ENCODE measurements at regions of chrX and their contacts with region 1.

Region 1: DNA sequence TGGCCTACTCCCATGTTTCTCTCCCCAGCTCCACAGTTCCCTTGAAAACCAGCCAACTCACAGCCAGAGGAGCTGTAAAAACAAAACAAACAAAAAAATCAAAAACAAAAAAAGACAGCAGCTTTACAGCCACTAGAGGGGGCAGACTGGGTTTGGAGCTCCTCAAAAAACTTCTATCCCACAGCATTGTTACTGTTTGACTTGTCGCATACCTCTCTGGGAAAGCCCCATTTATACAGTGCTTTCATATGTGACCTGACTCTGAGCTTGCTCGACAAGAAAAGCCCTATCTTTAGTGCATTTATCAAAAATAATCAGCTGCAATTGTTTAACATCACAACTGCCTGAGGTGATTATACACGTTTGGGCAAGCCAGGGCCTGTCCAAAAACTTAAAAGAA is 21.6 kb downstream of the TSPAN6 start:
- DNase-seq: peak; percentile 78
- ATAC-seq: peak; percentile 63
- H3K4me3 ChIP-seq: no peak overlapping the region
- H3K27ac ChIP-seq: no peak overlapping the region
- H3K4me1 ChIP-seq: no peaks in the 10 kb centered on the region
- H3K27me3 ChIP-seq: no peaks in the 10 kb centered on the region
- CTCF ChIP-seq: peak; percentile 67

Region 2: GRCh38 chrX:100512471-100512870 is 102.5 kb before region 1 on chrX:
- CTCF ChIA-PET with region 1: interaction called, 5 read pairs
- POLR2A ChIA-PET with region 1: no interaction called
- intact Hi-C with region 1: loop called (anchors 2 kb)
- DNase-seq: peak; percentile 40
- ATAC-seq: no peak; the same call in 1 of the 2 replicates
- H3K4me3 ChIP-seq: no peak overlapping the region
- H3K27ac ChIP-seq: no peak overlapping the region
- H3K4me1 ChIP-seq: peaks cover under 1% of the 10 kb centered on the region; the same call in 1 of the 2 replicates
- H3K27me3 ChIP-seq: no peaks in the 10 kb centered on the region
- CTCF ChIP-seq: peak; percentile 55

Region 3: GRCh38 chrX:100584611-100585010 is 30.4 kb before region 1 on chrX and contains the start of gene TNMD:
- CTCF ChIA-PET with region 1: no interaction called
- POLR2A ChIA-PET with region 1: no interaction called
- intact Hi-C with region 1: no loop called
- DNase-seq: no peak
- ATAC-seq: no peak
- H3K4me3 ChIP-seq: no peak within 1 kb of the TSS
- H3K27ac ChIP-seq: no peak within 1 kb of the TSS
- H3K4me1 ChIP-seq: no peaks in the 10 kb centered on the region
- H3K27me3 ChIP-seq: peaks cover 23% of the 10 kb centered on the region
- CTCF ChIP-seq: no peak
- total RNA-seq, gene TNMD: not detected in 2 replicates

Region 4: GRCh38 chrX:100596601-100597000 is 18.4 kb before region 1 on chrX:
- CTCF ChIA-PET with region 1: no interaction called
- POLR2A ChIA-PET with region 1: no interaction called
- intact Hi-C with region 1: no loop called
- DNase-seq: no peak
- ATAC-seq: no peak
- H3K4me3 ChIP-seq: no peak overlapping the region
- H3K27ac ChIP-seq: no peak overlapping the region
- H3K4me1 ChIP-seq: no peaks in the 10 kb centered on the region
- H3K27me3 ChIP-seq: peaks cover 34% of the 10 kb centered on the region
- CTCF ChIP-seq: no peak

Region 5: DNA sequence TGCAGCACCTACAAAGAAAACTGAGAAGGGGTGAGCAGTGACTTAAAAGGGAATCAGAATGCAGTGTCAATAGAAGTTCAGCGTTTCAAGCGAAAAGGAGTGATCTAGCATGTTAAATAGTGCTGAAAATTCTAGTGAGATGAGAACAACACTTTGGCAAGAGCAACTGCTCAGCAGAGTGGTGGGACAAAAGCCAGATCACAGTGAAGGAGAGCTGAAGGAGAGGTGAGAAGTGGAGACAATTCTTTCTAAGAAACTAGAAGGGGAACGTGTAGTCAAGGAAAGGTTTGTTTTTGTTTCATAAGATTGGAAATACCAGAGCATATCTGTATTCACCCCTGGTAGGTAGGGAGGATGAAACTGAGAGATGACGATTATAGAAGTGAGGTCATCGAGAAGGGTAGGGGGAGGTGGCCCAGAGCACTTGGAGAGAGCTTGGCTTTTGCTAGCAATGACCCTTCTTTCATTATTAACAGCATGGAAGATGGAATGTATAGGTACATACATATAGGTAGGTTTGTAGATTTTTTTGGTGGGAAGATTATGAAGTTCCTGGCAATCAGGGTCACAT is 62.7 kb after region 1 on chrX:
- CTCF ChIA-PET with region 1: no interaction called
- POLR2A ChIA-PET with region 1: no interaction called
- intact Hi-C with region 1: no loop called
- DNase-seq: no peak
- ATAC-seq: no peak
- H3K4me3 ChIP-seq: no peak overlapping the region
- H3K27ac ChIP-seq: no peak overlapping the region
- H3K4me1 ChIP-seq: peaks cover 16% of the 10 kb centered on the region
- H3K27me3 ChIP-seq: no peaks in the 10 kb centered on the region
- CTCF ChIP-seq: no peak